ENCODE measurements at regions of chr1 and their contacts with region 1.

Region 1: GRCh38 chr1:24415334-24415909 is at the start of gene NIPAL3:
- DNase-seq: peak; percentile 99
- ATAC-seq: peak; percentile 93
- H3K4me3 Mint-ChIP-seq: peak within 1 kb of the TSS; percentile 98
- H3K27ac Mint-ChIP-seq: peak within 1 kb of the TSS; percentile 95
- H3K4me1 Mint-ChIP-seq: peaks cover 47% of the 10 kb centered on the region
- H3K27me3 Mint-ChIP-seq: no peaks in the 10 kb centered on the region
- CTCF ChIP-seq: peak; percentile 82
- total RNA-seq, gene NIPAL3: 33.2 to 33.3 TPM

Region 2: GRCh38 chr1:24216276-24217074 is 198.9 kb before region 1 on chr1:
- CTCF ChIA-PET with region 1: no interaction called
- POLR2A ChIA-PET with region 1: no interaction called
- intact Hi-C with region 1: no loop called
- DNase-seq: no peak
- ATAC-seq: no peak
- H3K4me3 Mint-ChIP-seq: no peak overlapping the region
- H3K27ac Mint-ChIP-seq: no peak overlapping the region
- H3K4me1 Mint-ChIP-seq: no peaks in the 10 kb centered on the region
- H3K27me3 Mint-ChIP-seq: peaks cover 39% of the 10 kb centered on the region
- CTCF ChIP-seq: no peak

Region 3: GRCh38 chr1:24426744-24427544 is 11.5 kb after region 1 on chr1:
- CTCF ChIA-PET with region 1: interaction called, 31 read pairs
- POLR2A ChIA-PET with region 1: interaction called, 8 read pairs
- intact Hi-C with region 1: no loop called
- DNase-seq: no peak
- ATAC-seq: no peak
- H3K4me3 Mint-ChIP-seq: no peak overlapping the region
- H3K27ac Mint-ChIP-seq: no peak overlapping the region
- H3K4me1 Mint-ChIP-seq: peaks cover 38% of the 10 kb centered on the region
- H3K27me3 Mint-ChIP-seq: no peaks in the 10 kb centered on the region
- CTCF ChIP-seq: no peak

Region 4: DNA sequence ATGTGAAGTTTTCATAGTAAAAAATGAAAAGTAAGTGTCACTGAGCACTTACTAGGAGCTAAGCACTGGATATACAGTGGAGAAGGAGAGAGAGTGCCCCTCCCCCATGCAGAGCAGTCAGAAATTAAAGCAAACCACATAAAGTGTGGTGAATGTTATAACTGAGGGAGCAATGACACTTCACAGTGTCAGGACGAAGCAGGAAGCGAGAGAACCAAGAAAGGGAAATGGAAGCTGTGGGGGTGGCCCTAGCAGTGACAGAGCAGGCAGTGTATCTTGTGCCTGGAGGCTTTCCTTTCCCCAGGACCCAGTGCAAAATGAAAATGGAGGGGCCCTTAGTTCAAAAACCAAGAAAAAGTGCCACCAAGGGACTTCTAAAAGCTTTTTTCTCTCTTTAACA is 65.7 kb after region 1 on chr1:
- CTCF ChIA-PET with region 1: interaction called, 22 read pairs
- POLR2A ChIA-PET with region 1: interaction called, 6 read pairs
- intact Hi-C with region 1: loop called (anchors 5 kb)
- DNase-seq: peak; percentile 80
- ATAC-seq: peak; percentile 75
- H3K4me3 Mint-ChIP-seq: peak overlapping the region; percentile 59
- H3K27ac Mint-ChIP-seq: peak overlapping the region; percentile 97
- H3K4me1 Mint-ChIP-seq: peaks cover 58% of the 10 kb centered on the region
- H3K27me3 Mint-ChIP-seq: no peaks in the 10 kb centered on the region
- CTCF ChIP-seq: no peak

Region 5: GRCh38 chr1:24513706-24514105 is 98.3 kb after region 1 on chr1:
- CTCF ChIA-PET with region 1: interaction called, 16 read pairs
- POLR2A ChIA-PET with region 1: no interaction called
- intact Hi-C with region 1: no loop called
- DNase-seq: no peak
- ATAC-seq: no peak
- H3K4me3 Mint-ChIP-seq: no peak overlapping the region
- H3K27ac Mint-ChIP-seq: peak overlapping the region; percentile 0
- H3K4me1 Mint-ChIP-seq: peaks cover 61% of the 10 kb centered on the region
- H3K27me3 Mint-ChIP-seq: no peaks in the 10 kb centered on the region
- CTCF ChIP-seq: no peak

Region 6: DNA sequence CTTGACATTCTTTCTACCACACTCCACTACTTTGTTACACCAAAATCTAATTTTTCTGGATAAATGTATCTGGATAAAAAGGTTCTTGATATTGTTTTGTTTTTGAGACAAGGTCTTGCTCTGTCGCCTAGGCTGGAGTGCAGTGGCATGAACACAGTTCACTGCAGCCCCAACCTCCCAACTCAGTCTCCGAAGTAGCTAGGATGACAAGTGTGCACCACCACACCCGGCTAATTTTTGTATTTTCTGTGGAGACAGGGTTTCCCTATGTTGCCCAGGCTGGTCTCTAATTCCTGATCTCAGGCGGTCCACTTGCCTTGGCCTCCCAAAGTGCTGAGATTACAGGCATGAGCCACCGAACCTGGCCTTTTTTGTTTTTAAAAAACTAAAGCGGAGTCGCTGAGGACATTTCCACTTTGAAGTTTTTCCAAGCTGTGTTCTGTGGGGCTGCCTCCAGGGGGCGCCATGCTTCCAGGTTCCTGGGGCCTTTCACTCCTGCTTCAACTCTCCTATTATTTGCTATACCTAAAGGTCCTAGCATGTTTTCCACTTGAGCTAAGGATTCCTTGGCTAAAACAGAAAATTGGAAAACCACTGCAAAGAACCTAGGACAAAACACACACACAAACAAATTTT is 126.4 kb after region 1 on chr1:
- CTCF ChIA-PET with region 1: interaction called, 38 read pairs
- POLR2A ChIA-PET with region 1: interaction called, 4 read pairs
- intact Hi-C with region 1: loop called (anchors 5 kb)
- DNase-seq: peak; percentile 45
- ATAC-seq: no peak
- H3K4me3 Mint-ChIP-seq: no peak overlapping the region
- H3K27ac Mint-ChIP-seq: peak overlapping the region; percentile 84
- H3K4me1 Mint-ChIP-seq: peaks cover 60% of the 10 kb centered on the region
- H3K27me3 Mint-ChIP-seq: no peaks in the 10 kb centered on the region
- CTCF ChIP-seq: peak; percentile 83